PC-3 (cell line): ENCODE measurements at regions of chr14 and their contacts with region 1.

Region 1: GRCh38 chr14:52351233-52352060 is 37.3 kb downstream of the PTGER2 start:
- DNase-seq: peak; percentile 57
- ATAC-seq: peak; percentile 11
- H3K4me3 ChIP-seq: no peak overlapping the region
- H3K27ac ChIP-seq: peak overlapping the region; percentile 17
- H3K4me1 ChIP-seq: peaks cover 83% of the 10 kb centered on the region
- H3K27me3 ChIP-seq: no peaks in the 10 kb centered on the region
- CTCF ChIP-seq: no peak

Region 2: DNA sequence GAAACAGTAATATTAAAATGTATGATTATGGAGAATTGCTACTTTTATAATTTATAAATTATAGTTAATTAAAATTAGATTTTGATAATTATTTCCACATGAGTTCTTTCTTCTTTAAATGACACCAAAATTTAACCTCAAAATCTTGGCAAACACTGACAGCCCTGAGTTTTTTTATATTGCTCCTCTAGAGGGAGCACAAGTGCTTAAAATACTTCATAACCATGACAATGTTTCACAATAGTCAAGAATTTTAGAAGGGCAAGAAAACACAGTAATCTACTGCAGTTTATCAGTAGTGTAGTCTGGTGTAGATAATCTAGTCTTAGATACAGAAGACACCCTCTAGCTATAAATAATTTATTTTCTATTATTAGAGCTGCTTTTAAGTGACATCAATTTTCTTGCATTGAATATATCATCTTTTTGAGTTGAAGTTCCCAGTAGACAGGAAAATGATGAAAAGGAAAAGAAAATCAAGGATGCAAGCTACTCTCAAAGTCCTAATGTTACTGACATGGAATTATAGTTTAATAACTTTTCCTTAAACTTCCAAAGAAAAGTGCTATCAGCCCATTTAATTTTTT is 51.7 kb before region 1 on chr14:
- CTCF ChIA-PET with region 1: no interaction called
- POLR2A ChIA-PET with region 1: interaction called, 3 read pairs
- intact Hi-C with region 1: loop called (anchors 2 kb)
- DNase-seq: peak; percentile 80
- ATAC-seq: peak; percentile 72
- H3K4me3 ChIP-seq: no peak overlapping the region
- H3K27ac ChIP-seq: no peak overlapping the region
- H3K4me1 ChIP-seq: no peaks in the 10 kb centered on the region
- H3K27me3 ChIP-seq: no peaks in the 10 kb centered on the region
- CTCF ChIP-seq: peak; percentile 83

Region 3: DNA sequence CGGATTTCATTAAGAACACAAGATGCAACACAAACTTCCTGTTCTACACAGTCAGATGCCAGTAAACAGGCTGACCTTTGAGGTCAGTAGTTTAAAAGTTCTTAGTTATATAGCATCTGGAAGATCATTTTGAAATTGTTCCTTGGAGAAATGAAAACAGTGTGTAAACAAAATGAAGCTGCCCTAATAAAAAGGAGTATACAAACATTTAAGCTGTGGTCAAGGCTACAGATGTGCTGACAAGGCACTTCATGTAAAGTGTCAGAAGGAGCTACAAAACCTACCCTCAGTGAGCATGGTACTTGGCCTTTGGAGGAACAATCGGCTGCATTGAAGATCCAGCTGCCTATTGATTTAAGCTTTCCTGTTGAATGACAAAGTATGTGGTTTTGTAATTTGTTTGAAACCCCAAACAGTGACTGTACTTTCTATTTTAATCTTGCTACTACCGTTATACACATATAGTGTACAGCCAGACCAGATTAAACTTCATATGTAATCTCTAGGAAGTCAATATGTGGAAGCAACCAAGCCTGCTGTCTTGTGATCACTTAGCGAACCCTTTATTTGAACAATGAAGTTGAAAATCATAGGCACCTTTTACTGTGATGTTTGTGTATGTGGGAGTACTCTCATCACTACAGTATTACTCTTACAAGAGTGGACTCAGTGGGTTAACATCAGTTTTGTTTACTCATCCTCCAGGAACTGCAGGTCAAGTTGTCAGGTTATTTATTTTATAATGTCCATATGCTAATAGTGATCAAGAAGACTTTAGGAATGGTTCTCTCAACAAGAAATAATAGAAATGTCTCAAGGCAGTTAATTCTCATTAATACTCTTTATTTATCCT is 23.8 kb before region 1 on chr14:
- CTCF ChIA-PET with region 1: no interaction called
- POLR2A ChIA-PET with region 1: no interaction called
- intact Hi-C with region 1: loop called (anchors 1 kb)
- DNase-seq: peak; percentile 70
- ATAC-seq: peak; percentile 61
- H3K4me3 ChIP-seq: peak overlapping the region; percentile 4; the same call in 1 of the 2 replicates
- H3K27ac ChIP-seq: peak overlapping the region; percentile 93
- H3K4me1 ChIP-seq: peaks cover 33% of the 10 kb centered on the region
- H3K27me3 ChIP-seq: no peaks in the 10 kb centered on the region
- CTCF ChIP-seq: no peak

Region 4: GRCh38 chr14:52369305-52369801 is 17.9 kb after region 1 on chr14:
- CTCF ChIA-PET with region 1: interaction called, 4 read pairs
- POLR2A ChIA-PET with region 1: no interaction called
- intact Hi-C with region 1: loop called (anchors 2 kb)
- DNase-seq: peak; percentile 40
- ATAC-seq: peak; percentile 58
- H3K4me3 ChIP-seq: no peak overlapping the region
- H3K27ac ChIP-seq: no peak overlapping the region
- H3K4me1 ChIP-seq: peaks cover 23% of the 10 kb centered on the region
- H3K27me3 ChIP-seq: no peaks in the 10 kb centered on the region
- CTCF ChIP-seq: no peak

Region 5: DNA sequence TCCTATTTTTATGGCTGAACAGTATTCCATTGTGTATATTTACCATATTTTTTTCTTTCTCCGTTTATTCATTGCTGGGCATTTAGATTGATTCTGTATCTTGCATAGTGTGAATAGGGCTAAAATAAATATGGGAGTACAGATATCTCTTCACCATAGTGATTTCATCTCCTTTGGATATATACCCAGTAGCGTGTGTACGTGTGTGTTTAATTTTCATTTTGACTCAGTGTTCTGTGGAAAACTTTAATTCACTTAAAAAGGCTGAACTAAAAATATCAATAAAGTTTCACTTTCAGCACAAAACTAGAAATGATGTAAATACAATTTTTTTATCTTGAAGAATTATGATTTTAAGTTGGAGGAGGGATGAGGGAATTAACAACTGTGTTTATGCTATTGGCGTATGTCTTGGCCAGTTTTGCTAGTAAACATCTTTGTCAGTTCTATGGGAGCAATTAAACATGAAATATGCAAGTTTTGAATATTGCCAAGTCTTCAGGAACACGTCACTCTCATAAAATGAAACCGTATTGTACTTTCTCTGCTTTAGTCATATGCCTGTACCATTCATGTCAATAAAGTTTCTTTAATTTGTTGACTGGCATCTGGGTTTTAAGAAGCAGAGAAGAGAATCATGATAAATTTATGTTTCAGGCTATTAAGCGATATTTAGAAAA is 62.4 kb after region 1 on chr14:
- CTCF ChIA-PET with region 1: no interaction called
- POLR2A ChIA-PET with region 1: no interaction called
- intact Hi-C with region 1: loop called (anchors 2 kb)
- DNase-seq: peak; percentile 85
- ATAC-seq: peak; percentile 94
- H3K4me3 ChIP-seq: peak overlapping the region; percentile 29; the same call in 1 of the 2 replicates
- H3K27ac ChIP-seq: peak overlapping the region; percentile 10; the same call in 1 of the 2 replicates
- H3K4me1 ChIP-seq: peaks cover 9% of the 10 kb centered on the region
- H3K27me3 ChIP-seq: no peaks in the 10 kb centered on the region
- CTCF ChIP-seq: no peak